ENCODE measurements at regions of chr4 and their contacts with region 1.

Region 1: GRCh38 chr4:160631044-160631443 is 1528.2 kb downstream of the RAPGEF2 start:
- DNase-seq: no peak
- H3K4me3 ChIP-seq: no peak overlapping the region
- H3K4me3 Mint-ChIP-seq: no peak overlapping the region
- H3K27ac Mint-ChIP-seq: no peak overlapping the region
- H3K4me1 ChIP-seq: no peaks in the 10 kb centered on the region
- H3K4me1 Mint-ChIP-seq: no peaks in the 10 kb centered on the region
- H3K27me3 ChIP-seq: no peaks in the 10 kb centered on the region
- H3K27me3 Mint-ChIP-seq: no peaks in the 10 kb centered on the region
- CTCF ChIP-seq: no peak

Region 2: GRCh38 chr4:160485071-160485687 is 145.9 kb before region 1 on chr4:
- CTCF ChIA-PET with region 1: no interaction called
- POLR2A ChIA-PET with region 1: no interaction called
- intact Hi-C with region 1: loop called (anchors 5 kb)
- DNase-seq: no peak
- H3K4me3 ChIP-seq: no peak overlapping the region
- H3K4me3 Mint-ChIP-seq: no peak overlapping the region
- H3K27ac Mint-ChIP-seq: no peak overlapping the region
- H3K4me1 ChIP-seq: no peaks in the 10 kb centered on the region
- H3K4me1 Mint-ChIP-seq: no peaks in the 10 kb centered on the region
- H3K27me3 ChIP-seq: no peaks in the 10 kb centered on the region
- H3K27me3 Mint-ChIP-seq: no peaks in the 10 kb centered on the region
- CTCF ChIP-seq: no peak

Measured in Caco-2 (cell line).